Posterior vena cava (tissue), 2 donors: ENCODE measurements at regions of chr7 and their contacts with region 1.

Region 1: DNA sequence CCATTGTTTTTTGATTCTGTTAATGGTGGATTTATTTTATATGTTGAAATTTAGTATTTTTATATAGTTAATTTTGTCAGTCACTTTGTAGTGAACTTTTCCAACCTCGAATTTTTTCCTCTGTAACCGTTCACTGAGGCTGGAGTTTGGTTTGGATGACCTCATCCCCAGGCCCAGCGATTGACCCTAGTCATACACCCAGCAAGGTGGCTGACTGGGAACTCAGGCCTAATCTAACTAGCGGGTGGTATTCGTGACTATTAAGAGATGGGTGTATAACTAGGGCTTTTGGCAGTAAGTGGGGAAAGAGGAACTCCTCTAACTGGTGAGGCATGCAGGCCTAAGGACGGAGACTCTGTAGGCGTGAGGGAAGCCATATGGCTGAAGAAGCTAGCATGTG is 175.5 kb downstream of the SDK1 start:
- DNase-seq: no peak

Region 2: GRCh38 chr7:3408814-3409595 is 67.6 kb before region 1 on chr7:
- intact Hi-C with region 1: loop called in 1 of 2 experiments (anchors 2 kb)
- DNase-seq: no peak

Region 3: GRCh38 chr7:4204513-4205165 is 728.0 kb after region 1 on chr7:
- intact Hi-C with region 1: no loop called
- DNase-seq: peak; percentile 53